ENCODE measurements at regions of chr12 and their contacts with region 1.

Region 1: GRCh38 chr12:65999564-66000280 is 130.8 kb downstream of the LLPH start:
- DNase-seq: no peak
- H3K4me3 ChIP-seq: no peak overlapping the region
- H3K27ac ChIP-seq: no peak overlapping the region
- H3K4me1 ChIP-seq: no peaks in the 10 kb centered on the region
- H3K27me3 ChIP-seq: no peaks in the 10 kb centered on the region
- CTCF ChIP-seq: no peak
- EP300 ChIP-seq: no peak
- POLR2A ChIP-seq: no peak

Region 2: GRCh38 chr12:65585648-65586602 is 413.8 kb before region 1 on chr12:
- in situ Hi-C with region 1: loop called in 1 of 4 experiments (anchors 25 kb)
- intact Hi-C with region 1: no loop called
- DNase-seq: no peak
- H3K4me3 ChIP-seq: no peak overlapping the region
- H3K27ac ChIP-seq: no peak overlapping the region
- H3K4me1 ChIP-seq: no peaks in the 10 kb centered on the region
- H3K27me3 ChIP-seq: no peaks in the 10 kb centered on the region
- CTCF ChIP-seq: no peak
- EP300 ChIP-seq: no peak
- POLR2A ChIP-seq: no peak

Measured in transverse colon (tissue), 4 donors.